Activated CD4-positive, alpha-beta T cell treated with anti-CD3 and anti-CD28 coated beads for 36 hours (primary cell): ENCODE measurements at regions of chr15 and their contacts with region 1.

Region 1: DNA sequence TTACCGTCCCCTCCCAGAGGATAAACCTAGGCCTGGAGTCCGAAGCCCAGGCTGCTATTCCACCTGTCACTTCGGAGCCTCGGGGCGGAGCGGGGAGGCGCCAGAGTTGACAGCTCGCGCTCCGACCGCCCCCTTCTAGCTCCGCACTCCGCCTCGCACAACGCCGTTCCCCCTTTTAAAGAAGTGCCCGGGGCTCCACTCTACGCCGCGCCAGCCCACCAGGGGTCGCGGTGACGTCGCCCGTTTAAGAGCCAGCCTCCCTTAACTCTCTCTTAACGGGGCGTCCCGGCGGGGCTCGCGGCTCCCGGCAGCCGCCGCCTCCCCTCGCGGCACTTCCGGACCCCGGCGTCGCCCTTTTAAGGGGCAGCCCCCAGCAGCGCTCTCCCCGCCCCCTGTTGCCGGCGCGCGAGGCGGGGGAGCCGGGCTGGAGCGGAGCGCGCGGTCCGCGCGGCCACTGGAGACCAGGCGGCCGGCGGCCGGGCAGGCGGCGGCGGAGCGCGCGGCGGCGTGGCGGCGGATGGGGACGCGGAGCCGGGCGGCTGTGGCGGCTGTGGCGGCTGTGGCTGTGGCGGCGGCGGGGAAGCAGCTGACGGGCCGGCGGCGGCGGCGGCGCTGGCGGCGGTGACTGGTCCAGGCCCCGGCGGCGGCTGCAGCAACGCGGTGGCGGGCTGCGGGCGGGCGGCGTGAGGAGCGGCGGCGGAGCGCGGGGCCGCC is at the start of gene INAFM2:
- DNase-seq: peak; percentile 92
- ATAC-seq: peak; percentile 87
- H3K4me3 Mint-ChIP-seq: peak within 1 kb of the TSS; percentile 71
- H3K27ac Mint-ChIP-seq: no peak within 1 kb of the TSS
- H3K4me1 Mint-ChIP-seq: peaks cover 25% of the 10 kb centered on the region
- H3K27me3 Mint-ChIP-seq: no peaks in the 10 kb centered on the region
- total RNA-seq, gene INAFM2: 9.9 to 11.2 TPM

Region 2: GRCh38 chr15:40108855-40109735 is 214.3 kb before region 1 on chr15 and contains the start of gene BMF:
- CTCF ChIA-PET with region 1: interaction called, 3 read pairs
- POLR2A ChIA-PET with region 1: no interaction called
- intact Hi-C with region 1: loop called in 1 of 2 experiments (anchors 1 kb)
- DNase-seq: peak; percentile 98
- ATAC-seq: peak; percentile 51
- H3K4me3 Mint-ChIP-seq: peak within 1 kb of the TSS; percentile 78
- H3K27ac Mint-ChIP-seq: peak within 1 kb of the TSS; percentile 76
- H3K4me1 Mint-ChIP-seq: peaks cover 48% of the 10 kb centered on the region
- H3K27me3 Mint-ChIP-seq: peaks cover 2% of the 10 kb centered on the region
- total RNA-seq, gene BMF: 7.6 to 8.4 TPM

Region 3: DNA sequence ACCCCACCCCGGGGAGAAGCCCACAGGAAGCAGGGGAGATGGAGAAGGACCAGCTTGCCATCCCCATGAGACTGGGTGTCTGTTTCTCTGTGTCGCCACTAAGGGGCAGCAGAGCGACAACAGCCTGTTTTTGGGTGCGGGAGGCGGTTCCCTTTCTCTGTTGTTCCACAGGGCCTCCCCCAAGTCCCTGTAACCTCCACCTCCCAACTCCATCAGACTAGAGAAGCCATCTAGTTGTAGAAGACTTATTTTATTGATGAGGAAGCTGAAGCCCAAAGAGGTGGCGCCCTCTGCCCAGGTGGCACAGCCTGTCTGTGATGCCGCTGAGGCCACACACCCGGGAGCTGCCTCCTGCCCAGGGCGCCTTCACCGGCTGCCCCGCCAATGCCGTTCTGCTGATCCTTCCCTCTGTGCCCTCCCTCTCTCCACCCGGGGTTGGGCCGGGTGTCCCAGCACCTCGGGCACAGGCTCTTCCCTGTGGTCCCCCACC is 21.3 kb after region 1 on chr15:
- CTCF ChIA-PET with region 1: interaction called, 150 read pairs
- POLR2A ChIA-PET with region 1: interaction called, 7 read pairs
- intact Hi-C with region 1: no loop called
- DNase-seq: peak; percentile 85
- ATAC-seq: peak; percentile 93
- H3K4me3 Mint-ChIP-seq: no peak overlapping the region
- H3K27ac Mint-ChIP-seq: no peak overlapping the region
- H3K4me1 Mint-ChIP-seq: no peaks in the 10 kb centered on the region
- H3K27me3 Mint-ChIP-seq: no peaks in the 10 kb centered on the region

Region 4: GRCh38 chr15:40382580-40383456 is 59.4 kb after region 1 on chr15 and contains the start of gene KNSTRN:
- CTCF ChIA-PET with region 1: interaction called, 4 read pairs
- POLR2A ChIA-PET with region 1: no interaction called
- intact Hi-C with region 1: loop called in 1 of 2 experiments (anchors 1 kb)
- DNase-seq: peak; percentile 97
- ATAC-seq: peak; percentile 100
- H3K4me3 Mint-ChIP-seq: peak within 1 kb of the TSS; percentile 93
- H3K27ac Mint-ChIP-seq: peak within 1 kb of the TSS; percentile 78
- H3K4me1 Mint-ChIP-seq: peaks cover 22% of the 10 kb centered on the region
- H3K27me3 Mint-ChIP-seq: no peaks in the 10 kb centered on the region
- total RNA-seq, gene KNSTRN: 56.2 to 58.8 TPM

Region 5: DNA sequence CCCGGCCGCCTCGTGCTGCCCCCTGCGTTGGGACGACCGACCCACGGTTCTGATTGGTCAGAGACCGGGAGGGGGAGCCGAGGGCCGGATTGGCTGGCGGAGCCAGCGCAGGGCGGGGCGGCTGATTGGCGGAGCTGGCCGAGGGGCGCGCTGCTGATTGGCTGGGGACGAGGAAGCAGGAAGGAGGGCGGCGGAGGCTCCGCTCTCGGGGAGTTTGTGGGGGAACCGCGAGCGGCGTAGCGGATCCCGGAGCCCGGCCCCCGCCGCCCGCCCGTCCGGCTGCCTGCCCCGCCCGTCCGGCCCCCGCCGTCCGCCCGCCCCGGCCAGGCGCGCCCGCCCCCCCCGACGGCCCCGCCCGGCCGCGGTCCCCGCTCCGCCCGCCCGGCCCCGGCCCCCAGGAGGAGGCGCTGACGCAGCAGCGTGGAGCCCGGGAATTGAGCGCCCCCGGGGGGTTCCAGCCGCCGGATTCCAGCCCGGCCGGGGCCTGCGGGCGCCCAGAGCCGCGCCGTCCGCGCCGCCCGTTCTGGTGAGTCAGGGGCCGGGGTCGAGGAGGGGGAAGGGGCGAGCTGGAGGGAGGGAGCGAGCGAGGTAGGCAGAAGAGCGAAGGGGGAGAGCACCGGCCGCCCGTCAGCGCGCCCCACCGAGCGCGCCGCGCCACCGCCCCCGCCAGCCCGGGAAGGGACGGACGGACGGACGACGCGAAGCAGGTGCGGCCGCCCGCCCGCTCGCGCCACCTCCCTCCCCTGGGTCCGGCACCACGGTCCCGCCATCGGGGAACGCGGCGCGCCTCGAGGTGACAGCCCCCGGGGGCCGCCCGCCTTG is 117.6 kb after region 1 on chr15 and contains the start of gene BAHD1:
- CTCF ChIA-PET with region 1: interaction called, 3 read pairs
- POLR2A ChIA-PET with region 1: no interaction called
- intact Hi-C with region 1: loop called in 1 of 2 experiments (anchors 1 kb)
- DNase-seq: peak; percentile 97
- ATAC-seq: peak; percentile 92
- H3K4me3 Mint-ChIP-seq: peak within 1 kb of the TSS; percentile 82
- H3K27ac Mint-ChIP-seq: peak within 1 kb of the TSS; percentile 75
- H3K4me1 Mint-ChIP-seq: peaks cover 56% of the 10 kb centered on the region
- H3K27me3 Mint-ChIP-seq: peaks cover 29% of the 10 kb centered on the region
- total RNA-seq, gene BAHD1: 15.3 to 16.7 TPM

Region 6: DNA sequence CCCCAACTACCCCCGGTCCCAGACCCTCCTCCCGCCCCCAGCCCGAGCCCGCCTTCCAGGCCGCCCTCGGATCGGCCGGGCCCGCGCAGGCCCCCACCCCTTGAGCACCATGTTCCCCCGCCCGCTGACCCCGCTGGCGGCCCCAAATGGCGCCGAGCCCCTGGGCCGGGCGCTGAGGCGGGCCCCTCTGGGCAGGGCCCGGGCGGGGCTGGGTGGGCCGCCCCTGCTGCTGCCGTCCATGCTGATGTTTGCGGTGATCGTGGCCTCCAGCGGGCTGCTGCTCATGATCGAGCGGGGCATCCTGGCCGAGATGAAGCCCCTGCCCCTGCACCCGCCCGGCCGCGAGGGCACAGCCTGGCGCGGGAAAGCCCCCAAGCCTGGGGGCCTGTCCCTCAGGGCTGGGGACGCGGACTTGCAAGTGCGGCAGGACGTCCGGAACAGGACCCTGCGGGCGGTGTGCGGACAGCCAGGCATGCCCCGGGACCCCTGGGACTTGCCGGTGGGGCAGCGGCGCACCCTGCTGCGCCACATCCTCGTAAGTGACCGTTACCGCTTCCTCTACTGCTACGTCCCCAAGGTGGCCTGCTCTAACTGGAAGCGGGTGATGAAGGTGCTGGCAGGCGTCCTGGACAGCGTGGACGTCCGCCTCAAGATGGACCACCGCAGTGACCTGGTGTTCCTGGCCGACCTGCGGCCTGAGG is 147.9 kb after region 1 on chr15:
- CTCF ChIA-PET with region 1: no interaction called
- POLR2A ChIA-PET with region 1: no interaction called
- intact Hi-C with region 1: no loop called
- DNase-seq: peak; percentile 42
- ATAC-seq: peak; percentile 38
- H3K4me3 Mint-ChIP-seq: peak overlapping the region; percentile 76
- H3K27ac Mint-ChIP-seq: peak overlapping the region; percentile 74
- H3K4me1 Mint-ChIP-seq: peaks cover 19% of the 10 kb centered on the region
- H3K27me3 Mint-ChIP-seq: no peaks in the 10 kb centered on the region

Region 7: GRCh38 chr15:40731034-40731433 is 407.6 kb after region 1 on chr15:
- CTCF ChIA-PET with region 1: no interaction called
- POLR2A ChIA-PET with region 1: no interaction called
- intact Hi-C with region 1: no loop called
- DNase-seq: no peak
- ATAC-seq: no peak
- H3K4me3 Mint-ChIP-seq: no peak overlapping the region
- H3K27ac Mint-ChIP-seq: no peak overlapping the region
- H3K4me1 Mint-ChIP-seq: no peaks in the 10 kb centered on the region
- H3K27me3 Mint-ChIP-seq: no peaks in the 10 kb centered on the region